BJ (cell line): ENCODE measurements at regions of chr5 and their contacts with region 1.

Region 1: DNA sequence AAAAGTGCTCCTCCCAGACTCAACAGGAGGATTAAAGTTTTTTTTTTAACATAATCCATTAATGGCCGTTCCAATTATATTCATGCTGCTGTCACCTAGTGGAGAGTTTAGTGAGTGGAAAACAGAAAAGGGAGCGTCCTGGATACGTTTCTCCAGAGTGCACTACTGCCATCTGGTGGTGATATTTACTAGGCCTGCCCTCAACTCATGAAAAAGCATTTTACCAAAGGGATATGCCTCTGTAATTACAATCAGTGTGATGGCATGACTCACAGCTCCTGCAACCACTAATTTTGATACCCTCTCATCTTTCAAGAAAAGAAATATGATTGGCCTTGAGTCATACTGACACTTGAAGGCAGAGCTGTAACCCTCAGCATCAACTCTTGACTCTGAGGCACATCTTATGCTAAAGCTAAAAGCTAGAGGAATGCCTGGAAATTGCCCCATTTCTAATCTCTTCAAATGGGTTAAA is 20.0 kb downstream of the MINAR2 start:
- DNase-seq: no peak
- H3K4me3 ChIP-seq: no peak overlapping the region
- H3K27me3 ChIP-seq: no peaks in the 10 kb centered on the region
- CTCF ChIP-seq: peak; percentile 91

Region 2: GRCh38 chr5:129629575-129629974 is 138.4 kb before region 1 on chr5:
- CTCF ChIA-PET with region 1: no interaction called
- POLR2A ChIA-PET with region 1: no interaction called
- DNase-seq: no peak
- H3K4me3 ChIP-seq: no peak overlapping the region
- H3K27me3 ChIP-seq: no peaks in the 10 kb centered on the region
- CTCF ChIP-seq: no peak

Region 3: DNA sequence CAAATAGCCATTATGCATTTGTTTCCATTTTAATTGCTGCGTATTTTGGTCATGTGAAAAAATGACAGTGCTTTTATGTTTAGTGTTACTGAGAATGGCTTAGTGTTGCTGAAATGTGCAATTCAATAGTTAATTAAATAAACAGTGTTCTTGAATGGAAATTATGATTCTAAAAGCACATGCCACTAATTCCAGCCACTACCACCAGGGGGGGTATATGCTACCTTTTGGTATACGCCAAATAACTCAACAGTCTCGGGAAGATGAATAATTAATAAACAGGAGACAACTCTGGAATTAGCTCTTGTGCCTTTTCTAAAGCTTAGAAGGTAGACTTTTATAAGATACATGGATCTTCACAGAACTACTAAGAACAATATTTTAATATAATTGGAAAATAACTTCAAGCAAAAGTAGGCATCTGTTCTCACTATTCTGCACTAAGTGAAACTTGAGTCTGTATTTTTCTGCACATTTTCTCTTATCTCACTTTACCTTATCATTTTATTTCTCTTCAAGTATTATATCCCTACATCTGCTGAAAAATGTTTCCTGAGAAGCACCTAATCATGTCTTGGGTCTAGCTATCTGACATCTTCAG is 103.5 kb before region 1 on chr5:
- CTCF ChIA-PET with region 1: interaction called, 43 read pairs
- POLR2A ChIA-PET with region 1: no interaction called
- DNase-seq: no peak
- H3K4me3 ChIP-seq: no peak overlapping the region
- H3K27me3 ChIP-seq: no peaks in the 10 kb centered on the region
- CTCF ChIP-seq: peak; percentile 83

Region 4: GRCh38 chr5:129852747-129853352 is 84.9 kb after region 1 on chr5:
- CTCF ChIA-PET with region 1: interaction called, 31 read pairs
- POLR2A ChIA-PET with region 1: no interaction called
- DNase-seq: peak; percentile 5
- H3K4me3 ChIP-seq: no peak overlapping the region
- H3K27me3 ChIP-seq: no peaks in the 10 kb centered on the region
- CTCF ChIP-seq: peak; percentile 96

Region 5: GRCh38 chr5:130141659-130142320 is 373.8 kb after region 1 on chr5:
- CTCF ChIA-PET with region 1: interaction called, 15 read pairs
- POLR2A ChIA-PET with region 1: no interaction called
- DNase-seq: no peak
- H3K4me3 ChIP-seq: no peak overlapping the region
- H3K27me3 ChIP-seq: no peaks in the 10 kb centered on the region
- CTCF ChIP-seq: peak; percentile 88